Head of caudate nucleus (tissue), 42 donors: ENCODE measurements at regions of chr13 and their contacts with region 1.

Region 1: GRCh38 chr13:99176309-99177276 is 24.1 kb upstream of the UBAC2 start:
- DNase-seq: peak; percentile 47 to 91 (median 78)

Region 2: DNA sequence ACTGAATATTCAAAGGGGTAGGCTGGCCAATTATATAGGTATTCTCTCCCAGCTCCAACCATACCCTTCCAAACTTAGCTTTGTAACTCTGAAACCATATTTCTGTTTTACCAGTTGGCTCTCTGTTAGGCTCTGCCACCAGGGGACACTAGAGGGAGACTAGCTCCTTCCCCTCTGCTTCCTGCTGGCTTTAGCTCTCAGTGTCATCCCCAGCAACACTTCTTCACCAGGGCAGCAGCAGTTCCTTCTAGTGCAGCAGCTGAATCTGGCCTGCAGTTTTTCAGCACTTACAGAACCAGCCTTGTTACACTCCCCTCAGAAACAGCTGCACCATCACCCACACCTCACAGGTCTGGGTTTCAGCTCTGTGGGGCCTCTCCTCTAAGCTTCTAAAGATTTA is 147.7 kb before region 1 on chr13:
- intact Hi-C with region 1: no loop called
- DNase-seq: peak in 1 of 42 donors; percentile 24

Region 3: DNA sequence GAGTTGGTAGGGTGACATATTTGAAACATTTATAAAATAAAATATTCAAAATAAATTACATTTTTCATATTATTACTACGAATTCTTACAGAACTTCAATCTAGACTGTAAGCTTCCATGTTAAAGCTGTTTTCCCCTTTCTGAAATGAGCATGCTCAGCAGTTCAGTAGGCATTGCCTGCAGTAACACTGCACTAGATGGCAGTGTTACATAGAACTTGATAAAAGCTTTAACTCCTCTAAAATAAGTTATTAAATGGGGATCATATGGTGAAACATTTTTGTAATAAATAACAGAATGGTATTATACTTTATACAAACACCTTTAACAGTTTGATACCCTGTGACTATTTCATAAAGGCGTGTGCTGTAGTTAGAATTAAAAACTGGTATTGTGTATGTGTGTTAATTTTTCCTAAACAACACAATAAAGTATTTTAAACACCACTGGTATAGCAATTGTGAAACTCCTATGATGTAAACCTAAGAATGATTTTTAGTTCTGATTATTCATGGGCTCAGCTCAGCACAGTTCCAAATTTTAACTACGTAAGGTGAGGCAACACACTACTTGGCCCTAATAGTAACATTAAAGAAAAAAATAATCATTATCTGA is 93.1 kb after region 1 on chr13:
- intact Hi-C with region 1: loop called (anchors 5 kb)
- DNase-seq: peak in 12 of 42 donors; percentile 20 to 69 (median 36)

Region 4: DNA sequence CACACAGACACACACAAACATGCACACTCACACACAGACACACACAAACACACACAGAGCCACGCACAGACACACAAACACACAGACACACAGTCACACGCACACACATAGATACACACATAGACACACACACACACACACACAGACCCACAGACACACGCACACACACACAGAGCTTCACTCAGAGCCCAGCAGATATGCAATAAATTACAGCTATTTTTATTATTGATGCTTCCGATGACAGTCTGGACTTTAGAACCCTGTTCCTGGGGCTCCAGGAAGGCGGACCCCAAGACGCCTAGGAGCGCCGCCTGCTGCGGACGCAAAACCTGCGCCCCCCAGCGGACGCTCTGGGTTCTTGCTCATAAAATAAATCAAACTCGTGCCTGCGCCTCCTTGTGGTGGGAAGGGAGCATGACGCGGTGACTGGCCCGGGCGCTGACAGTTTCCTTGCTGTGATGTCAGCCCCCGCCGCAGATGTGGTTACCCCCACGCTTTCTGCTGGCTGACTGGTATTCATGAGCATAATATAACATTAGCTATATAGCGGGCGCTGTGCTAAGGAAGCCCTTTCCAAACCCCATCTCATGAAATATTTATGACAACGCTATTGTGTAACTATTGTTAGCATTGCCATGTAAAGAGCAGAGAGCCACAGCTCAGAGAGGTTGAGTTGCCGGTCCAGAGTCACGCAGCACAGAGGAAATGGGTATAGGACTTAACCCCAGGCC is 260.3 kb after region 1 on chr13:
- intact Hi-C with region 1: loop called (anchors 10 kb)
- DNase-seq: peak; percentile 79 to 94 (median 88)

Region 5: DNA sequence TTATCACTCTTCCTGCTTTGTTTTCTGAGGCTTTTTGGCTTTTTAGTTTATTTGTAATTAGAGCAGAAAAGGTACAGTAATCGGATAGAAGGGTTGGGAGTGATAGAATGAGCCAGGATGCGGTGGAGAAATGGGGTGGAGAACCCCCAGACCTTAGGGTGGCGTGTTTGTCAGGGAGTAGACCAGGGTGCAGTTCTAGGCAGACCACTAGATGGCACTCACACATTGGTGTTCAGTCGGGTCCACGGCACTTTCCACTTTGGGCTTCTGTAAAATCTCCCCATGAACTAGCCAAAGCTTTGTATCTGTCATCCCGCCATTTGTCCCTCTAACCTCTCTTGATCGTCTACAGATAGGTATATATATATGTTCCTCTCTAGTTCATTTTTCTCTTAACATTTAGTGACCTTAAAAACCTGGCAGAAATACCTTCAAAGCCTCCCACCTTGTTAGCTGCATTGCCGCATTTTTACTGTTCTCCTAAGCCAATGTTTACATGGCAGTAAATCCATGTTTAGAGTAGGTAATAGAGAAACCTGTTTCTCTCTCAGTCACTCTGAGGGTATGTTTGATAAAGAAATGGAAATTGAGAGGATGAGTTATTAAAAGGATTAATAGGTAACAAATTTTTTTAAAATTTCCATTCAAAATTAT is 479.6 kb after region 1 on chr13:
- intact Hi-C with region 1: no loop called
- DNase-seq: peak; percentile 57 to 95 (median 86)